Sigmoid colon (tissue), 7 donors: ENCODE measurements at regions of chr10 and their contacts with region 1.

Region 1: DNA sequence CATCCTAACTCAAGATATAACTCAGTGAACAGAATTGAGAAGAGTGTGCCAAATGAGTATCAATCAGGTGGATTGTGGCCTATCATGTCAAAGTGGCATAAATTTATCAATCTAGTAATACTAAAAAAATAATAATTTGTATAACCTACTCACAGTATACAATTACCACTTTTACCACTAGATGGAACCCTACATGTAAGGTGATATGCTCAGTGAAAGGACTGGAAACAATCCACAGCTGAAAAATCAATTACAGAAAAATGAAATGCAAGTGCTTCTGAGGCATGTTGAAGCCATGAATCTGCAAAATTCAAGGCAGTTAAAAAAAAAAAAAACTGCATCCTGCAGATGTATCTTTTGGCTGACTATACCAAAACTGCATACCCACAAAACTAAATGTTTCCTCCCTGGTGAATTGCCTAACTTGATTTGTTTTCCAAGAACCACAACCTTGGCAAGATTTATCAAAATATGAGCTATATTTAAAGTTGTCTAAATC is 13.9 kb downstream of the ARHGAP19 start:
- DNase-seq: no peak
- H3K4me3 ChIP-seq: no peak overlapping the region
- H3K27ac ChIP-seq: peak overlapping the region; percentile 16 to 47 (median 40)
- H3K4me1 ChIP-seq: peaks cover 0 to 15% (median 5%) of the 10 kb centered on the region in 4 donors
- H3K27me3 ChIP-seq: no peaks in the 10 kb centered on the region
- CTCF ChIP-seq: peak in 3 of 4 experiments; percentile 51 to 67 (median 64)
- EP300 ChIP-seq: no peak
- POLR2A ChIP-seq: no peak

Region 2: DNA sequence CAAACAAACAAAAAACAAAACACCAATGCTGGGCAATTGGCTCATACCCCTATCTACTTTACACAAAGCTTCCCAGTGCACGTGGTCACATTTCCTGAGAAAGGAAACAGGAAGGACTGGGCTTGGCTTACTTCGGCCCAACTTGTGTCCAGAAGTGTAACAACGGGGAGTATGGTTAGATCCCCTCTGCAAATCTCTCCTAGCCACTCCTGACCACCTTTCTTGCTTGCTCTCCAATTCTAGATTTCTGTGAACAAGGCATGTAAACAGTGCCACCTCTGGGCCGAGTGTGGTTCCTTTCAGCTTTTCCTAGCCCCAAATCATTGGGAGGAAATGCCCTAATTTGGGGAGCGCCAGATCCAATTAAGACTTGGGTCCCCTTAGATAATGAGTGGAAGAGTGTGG is 77.0 kb after region 1 on chr10:
- intact Hi-C with region 1: loop called (anchors 2 kb)
- DNase-seq: no peak
- H3K4me3 ChIP-seq: no peak overlapping the region
- H3K27ac ChIP-seq: no peak overlapping the region
- H3K4me1 ChIP-seq: no peaks in the 10 kb centered on the region
- H3K27me3 ChIP-seq: no peaks in the 10 kb centered on the region
- CTCF ChIP-seq: peak in 3 of 4 experiments; percentile 35 to 48 (median 38)
- EP300 ChIP-seq: no peak
- POLR2A ChIP-seq: no peak